Naive thymus-derived CD4-positive, alpha-beta T cell (primary cell): ENCODE measurements at regions of chr22 and their contacts with region 1.

Region 1: GRCh38 chr22:50620593-50621355 is 7.2 kb downstream of the ARSA start:
- DNase-seq: peak; percentile 61 to 95 (median 88)
- ATAC-seq: peak; percentile 88
- H3K4me3 ChIP-seq: peak overlapping the region; percentile 68
- H3K4me3 Mint-ChIP-seq: peak overlapping the region; percentile 81 to 97 (median 93)
- H3K27ac ChIP-seq: peak overlapping the region; percentile 93
- H3K27ac Mint-ChIP-seq: peak overlapping the region; percentile 93 to 100 (median 99)
- H3K4me1 ChIP-seq: peaks cover 17 to 27% of the 10 kb centered on the region in 2 donors
- H3K4me1 Mint-ChIP-seq: peaks cover 10 to 40% (median 33%) of the 10 kb centered on the region in 7 donors
- H3K27me3 ChIP-seq: no peaks in the 10 kb centered on the region
- H3K27me3 Mint-ChIP-seq: no peaks in the 10 kb centered on the region

Region 2: GRCh38 chr22:50244420-50245213 is 376.2 kb before region 1 on chr22 and contains the start of gene TUBGCP6:
- CTCF ChIA-PET with region 1: interaction called, 4 read pairs
- POLR2A ChIA-PET with region 1: interaction called, 24 read pairs
- intact Hi-C with region 1: loop called (anchors 1 kb)
- DNase-seq: peak; percentile 88 to 95 (median 93)
- ATAC-seq: peak; percentile 88
- H3K4me3 ChIP-seq: peak within 1 kb of the TSS; percentile 73
- H3K4me3 Mint-ChIP-seq: peak within 1 kb of the TSS; percentile 76 to 100 (median 98)
- H3K27ac ChIP-seq: peak within 1 kb of the TSS; percentile 96
- H3K27ac Mint-ChIP-seq: peak within 1 kb of the TSS; percentile 91 to 100 (median 100)
- H3K4me1 ChIP-seq: peaks cover 39 to 51% of the 10 kb centered on the region in 2 donors
- H3K4me1 Mint-ChIP-seq: peaks cover 16 to 52% (median 40%) of the 10 kb centered on the region in 7 donors
- H3K27me3 ChIP-seq: no peaks in the 10 kb centered on the region
- H3K27me3 Mint-ChIP-seq: no peaks in the 10 kb centered on the region
- total RNA-seq, gene TUBGCP6: 67.8 to 146 (median 134) TPM

Region 3: GRCh38 chr22:50326959-50327710 is 293.6 kb before region 1 on chr22 and contains the start of gene DENND6B:
- CTCF ChIA-PET with region 1: interaction called, 6 read pairs
- POLR2A ChIA-PET with region 1: no interaction called
- intact Hi-C with region 1: loop called in 1 of 2 experiments (anchors 5 kb)
- DNase-seq: peak in 8 of 9 donors; percentile 26 to 86 (median 58)
- ATAC-seq: peak; percentile 98
- H3K4me3 ChIP-seq: peak within 1 kb of the TSS; percentile 60
- H3K4me3 Mint-ChIP-seq: peak within 1 kb of the TSS; percentile 76 to 88 (median 81)
- H3K27ac ChIP-seq: peak within 1 kb of the TSS; percentile 64
- H3K27ac Mint-ChIP-seq: peak within 1 kb of the TSS; percentile 22 to 88 (median 55)
- H3K4me1 ChIP-seq: peaks cover 0 to 4% of the 10 kb centered on the region in 2 donors
- H3K4me1 Mint-ChIP-seq: peaks cover 5 to 15% (median 9%) of the 10 kb centered on the region in 7 donors
- H3K27me3 ChIP-seq: no peaks in the 10 kb centered on the region
- H3K27me3 Mint-ChIP-seq: peaks cover 0 to 33% (median 0%) of the 10 kb centered on the region in 5 donors
- total RNA-seq, gene DENND6B: 2.1 to 4.0 (median 2.8) TPM

Region 4: DNA sequence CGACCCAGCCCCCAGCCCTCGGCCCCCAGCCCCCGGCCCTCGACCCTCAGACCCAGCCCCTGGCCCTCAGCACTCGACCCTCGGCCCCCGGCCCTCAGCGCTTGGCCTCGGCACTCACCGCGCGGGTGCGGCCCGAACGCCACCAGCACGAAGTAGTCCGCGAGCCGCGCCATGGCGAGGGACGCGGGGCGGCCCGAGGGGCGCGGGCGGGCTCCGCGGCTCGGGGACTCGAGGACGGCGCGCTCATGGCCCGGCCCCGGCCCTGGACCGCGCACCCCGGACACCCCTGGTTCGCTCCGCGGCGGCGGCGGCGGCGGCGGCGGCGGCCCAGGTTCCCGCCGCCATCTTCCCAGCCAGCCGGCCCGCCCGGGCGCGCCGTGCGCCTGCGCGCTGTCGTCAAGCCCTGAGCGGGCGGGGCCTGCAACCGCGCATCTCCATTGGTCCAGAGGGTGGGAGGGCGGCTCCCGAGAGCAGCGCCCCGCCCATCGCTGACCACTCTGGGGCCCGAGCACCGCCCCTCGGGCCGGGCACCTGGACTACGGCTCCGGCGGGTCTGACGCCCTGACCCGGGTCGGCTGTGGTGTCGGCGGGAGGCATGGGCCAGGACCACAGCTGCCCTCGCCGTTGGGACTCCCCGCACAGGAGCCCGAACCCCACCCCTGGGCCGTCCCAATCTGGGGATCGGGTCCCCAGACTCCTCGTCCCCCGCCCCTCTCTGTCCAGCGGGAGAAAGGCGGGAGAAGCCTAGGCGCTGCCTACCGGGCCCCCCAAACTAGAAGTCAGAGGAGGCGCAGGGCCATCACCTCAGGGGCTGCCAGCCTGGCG is 145.9 kb before region 1 on chr22 and contains the start of gene SBF1:
- CTCF ChIA-PET with region 1: interaction called, 6 read pairs
- POLR2A ChIA-PET with region 1: interaction called, 15 read pairs
- intact Hi-C with region 1: loop called in 1 of 2 experiments (anchors 1 kb)
- DNase-seq: peak; percentile 75 to 94 (median 85)
- ATAC-seq: peak; percentile 89
- H3K4me3 ChIP-seq: peak within 1 kb of the TSS; percentile 72
- H3K4me3 Mint-ChIP-seq: peak within 1 kb of the TSS; percentile 93 to 100 (median 96)
- H3K27ac ChIP-seq: peak within 1 kb of the TSS; percentile 90
- H3K27ac Mint-ChIP-seq: peak within 1 kb of the TSS; percentile 91 to 97 (median 93)
- H3K4me1 ChIP-seq: peaks cover 39 to 42% of the 10 kb centered on the region in 2 donors
- H3K4me1 Mint-ChIP-seq: peaks cover 29 to 56% (median 47%) of the 10 kb centered on the region in 7 donors
- H3K27me3 ChIP-seq: no peaks in the 10 kb centered on the region
- H3K27me3 Mint-ChIP-seq: peaks cover 0 to 19% (median 0%) of the 10 kb centered on the region in 5 donors
- total RNA-seq, gene SBF1: 161 to 209 (median 181) TPM

Region 5: DNA sequence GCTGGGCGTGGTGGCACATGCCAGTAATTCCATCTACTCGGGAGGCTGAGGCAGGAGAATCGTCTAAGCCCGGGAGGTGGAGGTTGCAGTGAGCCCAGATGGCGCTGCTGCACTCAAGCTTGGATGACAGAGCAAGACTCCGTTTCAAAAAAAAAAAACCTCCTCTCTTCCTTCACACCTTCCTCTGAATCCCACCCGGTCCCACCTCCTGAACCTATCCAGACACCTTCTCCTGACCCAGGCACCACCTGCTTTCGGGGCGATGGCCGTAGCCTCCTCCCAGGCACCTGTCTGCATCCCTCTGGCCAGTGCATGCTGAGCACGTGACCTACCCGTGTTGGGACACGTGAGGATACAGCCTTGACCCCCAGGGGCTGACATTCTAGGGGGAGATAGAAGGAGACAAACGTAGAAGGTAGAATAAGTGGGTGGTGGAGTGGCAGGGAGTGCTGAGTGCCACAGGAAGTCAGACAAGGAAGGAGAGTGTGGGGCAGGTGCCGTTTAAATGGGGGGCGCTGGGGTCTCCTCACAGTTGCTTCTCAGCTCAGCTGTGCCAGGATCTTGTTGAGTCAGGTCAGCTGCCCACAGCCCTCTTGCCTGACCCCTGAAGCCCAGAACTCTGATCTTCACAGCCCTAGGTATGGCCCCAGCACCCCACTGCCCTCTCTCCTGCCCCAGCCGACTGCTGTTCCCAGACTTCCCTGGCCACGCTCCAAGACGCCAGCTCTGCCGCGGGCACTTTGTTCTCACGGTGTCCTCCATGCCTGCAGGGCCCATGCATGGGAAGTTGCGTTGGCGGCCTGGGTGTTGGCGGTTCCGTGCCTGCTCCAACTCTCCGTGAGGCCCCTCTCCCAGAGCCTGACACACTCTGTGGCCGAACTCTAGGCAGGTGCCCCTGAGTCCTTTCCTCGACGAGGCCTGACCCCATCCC is 135.3 kb before region 1 on chr22:
- CTCF ChIA-PET with region 1: no interaction called
- POLR2A ChIA-PET with region 1: no interaction called
- intact Hi-C with region 1: no loop called
- DNase-seq: no peak
- ATAC-seq: no peak
- H3K4me3 ChIP-seq: no peak overlapping the region
- H3K4me3 Mint-ChIP-seq: peak overlapping the region in 1 of 10 donors; percentile 59
- H3K27ac ChIP-seq: no peak overlapping the region
- H3K27ac Mint-ChIP-seq: peak overlapping the region in 3 of 9 donors; percentile 46 to 68 (median 54)
- H3K4me1 ChIP-seq: peaks cover 4 to 8% of the 10 kb centered on the region in 2 donors
- H3K4me1 Mint-ChIP-seq: peaks cover 0 to 11% (median 2%) of the 10 kb centered on the region in 7 donors
- H3K27me3 ChIP-seq: no peaks in the 10 kb centered on the region
- H3K27me3 Mint-ChIP-seq: peaks cover 0 to 3% (median 0%) of the 10 kb centered on the region in 5 donors

Region 6: GRCh38 chr22:50530877-50531545 is 89.8 kb before region 1 on chr22:
- CTCF ChIA-PET with region 1: interaction called, 27 read pairs
- POLR2A ChIA-PET with region 1: interaction called, 91 read pairs
- intact Hi-C with region 1: loop called in 1 of 2 experiments (anchors 1 kb)
- DNase-seq: peak in 7 of 9 donors; percentile 46 to 85 (median 57)
- ATAC-seq: peak; percentile 60
- H3K4me3 ChIP-seq: peak overlapping the region; percentile 86
- H3K4me3 Mint-ChIP-seq: peak overlapping the region; percentile 80 to 96 (median 87)
- H3K27ac ChIP-seq: peak overlapping the region; percentile 84
- H3K27ac Mint-ChIP-seq: peak overlapping the region; percentile 67 to 100 (median 90)
- H3K4me1 ChIP-seq: peaks cover 5 to 14% of the 10 kb centered on the region in 2 donors
- H3K4me1 Mint-ChIP-seq: peaks cover 0 to 49% (median 30%) of the 10 kb centered on the region in 7 donors
- H3K27me3 ChIP-seq: no peaks in the 10 kb centered on the region
- H3K27me3 Mint-ChIP-seq: peaks cover 0 to 5% (median 0%) of the 10 kb centered on the region in 5 donors

Region 7: GRCh38 chr22:50582562-50583293 is 38.0 kb before region 1 on chr22 and contains the start of gene CHKB:
- CTCF ChIA-PET with region 1: interaction called, 8 read pairs
- POLR2A ChIA-PET with region 1: interaction called, 32 read pairs
- intact Hi-C with region 1: loop called (anchors 1 kb)
- DNase-seq: peak; percentile 95 to 99 (median 99)
- ATAC-seq: peak; percentile 97
- H3K4me3 ChIP-seq: peak within 1 kb of the TSS; percentile 80
- H3K4me3 Mint-ChIP-seq: peak within 1 kb of the TSS; percentile 84 to 97 (median 92)
- H3K27ac ChIP-seq: peak within 1 kb of the TSS; percentile 99
- H3K27ac Mint-ChIP-seq: peak within 1 kb of the TSS; percentile 84 to 96 (median 96)
- H3K4me1 ChIP-seq: peaks cover 16 to 18% of the 10 kb centered on the region in 2 donors
- H3K4me1 Mint-ChIP-seq: peaks cover under 1 to 35% (median 18%) of the 10 kb centered on the region in 7 donors
- H3K27me3 ChIP-seq: no peaks in the 10 kb centered on the region
- H3K27me3 Mint-ChIP-seq: no peaks in the 10 kb centered on the region
- total RNA-seq, gene CHKB: 121 to 214 (median 191) TPM